WTC11 (cell line): ENCODE measurements at regions of chr9 and their contacts with region 1.

Region 1: DNA sequence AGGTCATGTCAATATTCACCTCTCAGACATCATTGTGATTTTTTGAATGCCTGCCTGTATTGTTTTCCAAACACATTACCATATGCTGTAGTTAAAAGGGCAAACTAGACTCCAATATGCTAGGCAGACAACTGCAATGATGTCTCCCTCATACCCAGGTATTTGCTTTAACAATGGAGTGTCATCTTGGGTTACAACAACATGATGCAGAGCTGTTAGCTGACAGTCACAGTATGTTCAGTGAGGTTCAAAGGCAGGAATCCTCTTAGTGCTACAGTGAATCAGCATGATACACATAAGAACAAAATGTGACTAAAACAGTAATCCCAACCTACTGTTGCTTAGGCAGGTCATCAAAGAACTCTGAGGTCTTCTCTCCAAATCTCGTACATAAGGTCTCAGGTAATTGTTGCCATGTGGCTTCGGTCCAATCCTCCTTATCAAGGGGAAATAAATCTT is 24.0 kb downstream of the OR1J1 start:
- DNase-seq: no peak
- ATAC-seq: no peak
- H3K4me3 Mint-ChIP-seq: no peak overlapping the region
- H3K27ac Mint-ChIP-seq: no peak overlapping the region
- H3K4me1 Mint-ChIP-seq: no peaks in the 10 kb centered on the region
- H3K27me3 Mint-ChIP-seq: peaks cover 9% of the 10 kb centered on the region
- CTCF ChIP-seq: no peak; the same call in 1 of the 2 replicates

Region 2: GRCh38 chr9:122379340-122379739 is 74.4 kb before region 1 on chr9:
- CTCF ChIA-PET with region 1: interaction called, 11 read pairs
- POLR2A ChIA-PET with region 1: no interaction called
- DNase-seq: peak; percentile 35
- ATAC-seq: no peak; the same call in 1 of the 2 replicates
- H3K4me3 Mint-ChIP-seq: no peak overlapping the region
- H3K27ac Mint-ChIP-seq: no peak overlapping the region
- H3K4me1 Mint-ChIP-seq: peaks cover 22% of the 10 kb centered on the region
- H3K27me3 Mint-ChIP-seq: peaks cover 14% of the 10 kb centered on the region
- CTCF ChIP-seq: peak; percentile 64

Region 3: GRCh38 chr9:122464633-122465567 is 11.2 kb after region 1 on chr9:
- CTCF ChIA-PET with region 1: interaction called, 10 read pairs
- POLR2A ChIA-PET with region 1: no interaction called
- DNase-seq: peak; percentile 55
- ATAC-seq: peak; percentile 66
- H3K4me3 Mint-ChIP-seq: no peak overlapping the region
- H3K27ac Mint-ChIP-seq: no peak overlapping the region
- H3K4me1 Mint-ChIP-seq: peaks cover 2% of the 10 kb centered on the region; the same call in 1 of the 2 replicates
- H3K27me3 Mint-ChIP-seq: peaks cover 57% of the 10 kb centered on the region
- CTCF ChIP-seq: peak; percentile 53; the same call in 1 of the 2 replicates